ENCODE measurements at regions of chr18 and their contacts with region 1.

Region 1: GRCh38 chr18:9951022-9951859 is 37.4 kb downstream of the VAPA start:
- DNase-seq: no peak
- H3K4me3 ChIP-seq: no peak overlapping the region
- H3K27me3 ChIP-seq: no peaks in the 10 kb centered on the region
- CTCF ChIP-seq: peak; percentile 76

Region 2: GRCh38 chr18:9683407-9684396 is 267.5 kb before region 1 on chr18:
- CTCF ChIA-PET with region 1: interaction called, 21 read pairs
- POLR2A ChIA-PET with region 1: no interaction called
- DNase-seq: peak; percentile 27
- H3K4me3 ChIP-seq: no peak overlapping the region
- H3K27me3 ChIP-seq: no peaks in the 10 kb centered on the region
- CTCF ChIP-seq: peak; percentile 68

Region 3: GRCh38 chr18:9792565-9793245 is 158.5 kb before region 1 on chr18:
- CTCF ChIA-PET with region 1: no interaction called
- POLR2A ChIA-PET with region 1: no interaction called
- DNase-seq: no peak
- H3K4me3 ChIP-seq: no peak overlapping the region
- H3K27me3 ChIP-seq: no peaks in the 10 kb centered on the region
- CTCF ChIP-seq: peak; percentile 50

Region 4: GRCh38 chr18:9941103-9941502 is 10.1 kb before region 1 on chr18:
- CTCF ChIA-PET with region 1: interaction called, 11 read pairs
- POLR2A ChIA-PET with region 1: no interaction called
- DNase-seq: no peak
- H3K4me3 ChIP-seq: no peak overlapping the region
- H3K27me3 ChIP-seq: no peaks in the 10 kb centered on the region
- CTCF ChIP-seq: no peak

Region 5: DNA sequence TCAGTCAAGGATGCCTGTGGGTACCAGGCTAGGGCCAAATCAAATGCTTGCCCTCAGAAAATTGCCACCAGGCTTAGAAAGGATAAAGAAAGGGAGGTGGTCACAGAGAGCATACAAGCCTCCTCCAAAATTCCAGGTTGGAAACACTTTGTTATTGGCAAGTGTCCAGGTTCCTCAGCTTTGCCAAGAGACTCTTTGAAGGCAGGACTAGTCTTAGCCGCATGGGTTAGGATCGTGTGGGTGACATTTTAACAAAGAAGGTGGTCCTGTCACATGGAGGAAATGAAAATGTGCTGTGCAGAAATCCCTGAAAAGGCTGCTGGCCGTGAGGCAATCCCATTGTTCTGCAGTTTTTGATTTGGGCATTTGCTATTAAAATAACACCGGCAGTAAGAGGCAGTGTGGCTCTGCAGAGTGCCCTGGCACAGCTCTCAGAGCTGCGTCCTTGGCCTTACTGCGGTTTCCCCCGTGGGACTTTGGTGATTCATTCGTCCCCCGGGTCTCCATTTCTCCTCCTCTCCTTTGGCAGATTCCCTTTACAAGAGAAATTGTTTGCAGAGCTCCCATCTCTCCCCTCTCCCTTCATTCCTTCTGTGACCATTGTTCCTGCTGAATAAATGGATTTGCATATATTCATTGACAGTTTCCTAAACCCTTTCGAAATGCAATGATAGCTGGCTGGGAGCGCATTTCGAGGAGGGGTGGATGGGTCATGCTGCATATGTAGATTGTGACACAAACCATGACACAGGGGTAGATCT is 149.9 kb after region 1 on chr18:
- CTCF ChIA-PET with region 1: no interaction called
- POLR2A ChIA-PET with region 1: no interaction called
- DNase-seq: no peak
- H3K4me3 ChIP-seq: no peak overlapping the region
- H3K27me3 ChIP-seq: 0 out of 2 replicates have a peak, but pooled peaks cover 1% of the 10 kb centered on the region
- CTCF ChIP-seq: no peak